ENCODE measurements at regions of chr15 and their contacts with region 1.

Region 1: DNA sequence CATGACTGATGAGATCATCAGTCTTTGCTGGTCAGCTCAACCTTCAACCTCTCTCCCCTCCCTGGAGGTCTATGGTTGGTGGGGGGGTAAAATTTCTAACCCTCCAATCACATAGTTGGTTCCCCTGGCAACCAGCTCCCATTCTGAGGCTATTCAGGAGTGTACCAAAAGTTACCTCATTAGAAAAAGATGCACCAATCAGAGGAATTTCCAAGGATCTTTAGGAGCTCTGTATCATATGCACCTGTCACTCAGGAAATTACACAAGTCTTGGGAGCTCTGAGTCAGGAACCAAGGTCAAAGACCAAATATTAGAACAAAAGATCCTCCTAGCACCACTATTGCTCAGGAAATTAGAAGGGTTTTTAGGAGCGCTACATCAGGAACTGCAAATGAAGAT is 21.4 kb upstream of the LEO1 start:
- DNase-seq: peak in 1 of 2 experiments; percentile 78
- H3K4me3 ChIP-seq: no peak overlapping the region
- H3K27ac ChIP-seq: peak overlapping the region; percentile 39; the same call in 1 of the 2 replicates
- H3K4me1 ChIP-seq: peaks cover 28% of the 10 kb centered on the region
- H3K27me3 ChIP-seq: no peaks in the 10 kb centered on the region
- CTCF ChIP-seq: no peak

Region 2: GRCh38 chr15:51955504-51956101 is 37.4 kb before region 1 on chr15:
- CTCF ChIA-PET with region 1: no interaction called
- POLR2A ChIA-PET with region 1: interaction called, 16 read pairs
- intact Hi-C with region 1: no loop called
- DNase-seq: no peak
- H3K4me3 ChIP-seq: no peak overlapping the region
- H3K27ac ChIP-seq: no peak overlapping the region
- H3K4me1 ChIP-seq: no peaks in the 10 kb centered on the region
- H3K27me3 ChIP-seq: no peaks in the 10 kb centered on the region
- CTCF ChIP-seq: no peak

Region 3: GRCh38 chr15:51971375-51972133 is 21.4 kb before region 1 on chr15 and contains the start of gene LEO1:
- CTCF ChIA-PET with region 1: interaction called, 11 read pairs
- POLR2A ChIA-PET with region 1: no interaction called
- intact Hi-C with region 1: no loop called
- DNase-seq: peak; percentile 82 to 86
- H3K4me3 ChIP-seq: peak within 1 kb of the TSS; percentile 71
- H3K27ac ChIP-seq: peak within 1 kb of the TSS; percentile 59
- H3K4me1 ChIP-seq: peaks cover 23% of the 10 kb centered on the region
- H3K27me3 ChIP-seq: no peaks in the 10 kb centered on the region
- CTCF ChIP-seq: no peak; the same call in 1 of the 2 replicates
- total RNA-seq, gene LEO1: 18.2 and 21.7 TPM in 2 replicates

Region 4: DNA sequence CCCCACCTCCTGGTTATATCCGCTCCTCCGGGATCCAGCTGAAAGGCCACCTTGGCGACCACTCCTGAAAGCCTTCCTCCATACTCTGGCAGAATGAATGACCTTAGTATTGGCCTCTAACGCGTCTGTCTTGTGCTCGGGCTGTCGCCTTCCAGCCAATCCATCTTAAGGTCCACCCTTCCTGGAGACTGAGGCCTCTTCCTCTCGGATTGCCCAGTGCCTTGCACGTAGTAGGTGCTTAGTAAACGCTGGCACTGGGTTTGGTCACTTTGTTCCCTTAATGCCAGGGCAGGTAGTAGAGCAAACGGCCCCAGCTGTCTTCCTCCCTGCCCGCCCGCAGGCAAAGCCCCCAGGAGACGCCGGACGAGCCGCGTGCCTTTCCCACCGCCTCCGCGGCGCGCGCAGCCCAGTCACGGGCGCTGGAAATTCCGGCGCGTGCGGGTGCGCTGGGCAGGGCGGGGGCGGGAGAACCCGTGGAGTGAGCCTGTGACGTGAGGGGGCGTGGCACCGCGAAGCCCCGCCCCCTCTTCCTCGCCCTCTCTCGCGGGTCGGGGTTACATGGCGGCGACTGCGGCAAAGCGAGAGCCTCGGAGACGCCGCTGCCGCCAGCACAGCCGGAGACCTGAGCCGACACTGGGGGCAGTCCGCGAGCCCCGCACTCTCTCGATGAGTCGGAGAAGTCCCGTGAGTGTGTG is 25.9 kb after region 1 on chr15 and contains the start of gene MAPK6:
- CTCF ChIA-PET with region 1: no interaction called
- POLR2A ChIA-PET with region 1: no interaction called
- intact Hi-C with region 1: loop called (anchors 2 kb)
- DNase-seq: peak; percentile 67 to 90
- H3K4me3 ChIP-seq: peak within 1 kb of the TSS; percentile 99
- H3K27ac ChIP-seq: peak within 1 kb of the TSS; percentile 83
- H3K4me1 ChIP-seq: peaks cover 16% of the 10 kb centered on the region
- H3K27me3 ChIP-seq: no peaks in the 10 kb centered on the region
- CTCF ChIP-seq: no peak
- total RNA-seq, gene MAPK6: 27.5 and 38.7 TPM in 2 replicates

Measured in PC-9 (cell line).